K562 (cell line): ENCODE measurements at regions of chr3 and their contacts with region 1.

Region 1: GRCh38 chr3:87350364-87351199 is 74.2 kb upstream of the POU1F1 start:
- DNase-seq: peak; percentile 40 to 48 (median 43)
- ATAC-seq: peak; percentile 92
- H3K4me3 ChIP-seq: no peak overlapping the region
- H3K27ac ChIP-seq: no peak overlapping the region
- H3K4me1 ChIP-seq: no peaks in the 10 kb centered on the region; a peak in 1 of 5 replicates
- H3K27me3 ChIP-seq: no peaks in the 10 kb centered on the region
- CTCF ChIP-seq: peak; percentile 53 to 73 (median 55)
- EP300 ChIP-seq: no peak
- POLR2A ChIP-seq: no peak
- RAD21 ChIP-seq: peak; percentile 66 to 74

Region 2: DNA sequence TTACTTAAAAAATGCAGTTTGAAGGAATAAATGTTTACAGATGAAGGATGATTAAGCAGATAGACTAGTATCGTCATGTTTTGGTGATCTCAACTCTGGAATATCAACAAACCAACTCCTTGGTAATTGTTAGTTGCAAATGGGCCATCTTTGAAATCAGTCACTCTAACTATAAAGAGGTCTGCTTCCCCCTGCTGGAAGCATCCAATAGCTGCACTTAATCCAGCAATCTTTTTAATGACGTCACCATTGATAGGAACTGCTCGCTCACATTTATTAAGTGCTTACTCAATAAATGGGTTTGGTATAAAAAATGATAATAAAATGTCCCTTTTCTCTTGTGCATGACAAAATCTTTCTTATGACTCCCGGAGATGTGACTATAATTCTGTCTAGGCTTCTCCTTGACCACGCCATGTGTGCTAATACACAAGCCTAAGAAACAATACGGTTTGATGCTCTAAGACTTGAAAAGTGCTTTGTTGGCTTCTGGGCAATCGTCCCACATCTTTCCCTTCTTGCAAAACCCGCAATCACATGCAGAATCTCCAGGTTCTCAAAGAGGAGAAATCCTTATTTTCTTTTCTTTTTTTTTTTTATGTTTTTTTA is 153.4 kb after region 1 on chr3:
- CTCF ChIA-PET with region 1: no interaction called
- POLR2A ChIA-PET with region 1: no interaction called
- in situ Hi-C with region 1: no loop called
- intact Hi-C with region 1: loop called (anchors 1 kb)
- DNase-seq: peak; percentile 32 to 54 (median 43)
- ATAC-seq: peak; percentile 61; the same call in 2 of the 3 replicates
- H3K4me3 ChIP-seq: no peak overlapping the region
- H3K27ac ChIP-seq: no peak overlapping the region
- H3K4me1 ChIP-seq: no peaks in the 10 kb centered on the region
- H3K27me3 ChIP-seq: no peaks in the 10 kb centered on the region
- CTCF ChIP-seq: peak; percentile 38 to 66 (median 46); a peak in 5 of 6 replicates
- EP300 ChIP-seq: no peak
- POLR2A ChIP-seq: no peak
- RAD21 ChIP-seq: peak in 1 of 2 experiments; percentile 53; a peak in 2 of 4 replicates

Region 3: DNA sequence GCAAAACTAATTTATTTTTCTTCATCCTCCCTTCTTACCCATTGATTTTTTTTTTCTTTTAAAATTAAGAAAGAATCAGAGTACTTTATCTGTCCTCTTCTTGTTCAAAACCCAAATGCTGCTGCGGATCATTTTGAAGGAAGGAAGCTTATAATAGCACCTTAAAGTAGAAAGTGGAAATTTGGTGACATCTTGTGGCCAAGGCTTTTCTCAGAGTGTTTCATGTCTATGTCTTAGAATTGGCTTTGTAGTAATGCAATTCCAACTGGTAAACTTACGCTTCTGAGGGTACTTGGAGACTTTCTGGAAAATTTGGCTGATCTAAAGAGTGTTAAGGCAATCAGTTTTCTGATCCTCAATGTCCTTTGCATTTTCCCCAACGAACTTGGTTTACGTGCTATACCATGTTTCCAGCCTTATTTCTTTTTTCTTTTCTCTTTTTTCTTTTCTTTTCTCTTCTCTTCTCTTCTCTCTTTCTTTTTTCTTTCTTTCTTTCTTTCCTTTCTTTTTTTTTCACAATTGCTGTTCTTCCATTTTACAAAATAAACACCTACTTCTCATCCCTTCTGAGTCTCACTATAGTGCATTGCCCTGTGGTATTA is 829.9 kb after region 1 on chr3:
- CTCF ChIA-PET with region 1: no interaction called
- POLR2A ChIA-PET with region 1: no interaction called
- in situ Hi-C with region 1: no loop called
- intact Hi-C with region 1: loop called (anchors 1 kb)
- DNase-seq: peak in 2 of 4 experiments; percentile 16 to 60
- ATAC-seq: peak; percentile 86
- H3K4me3 ChIP-seq: no peak overlapping the region
- H3K27ac ChIP-seq: no peak overlapping the region
- H3K4me1 ChIP-seq: no peaks in the 10 kb centered on the region
- H3K27me3 ChIP-seq: no peaks in the 10 kb centered on the region
- CTCF ChIP-seq: peak; percentile 30 to 50 (median 45); a peak in 5 of 6 replicates
- EP300 ChIP-seq: no peak
- POLR2A ChIP-seq: no peak
- RAD21 ChIP-seq: peak; percentile 54 to 76